Activated B cell treated with CpG ODN at 0.5 μM for 24 hours (primary cell): ENCODE measurements at regions of chr19 and their contacts with region 1.

Region 1: DNA sequence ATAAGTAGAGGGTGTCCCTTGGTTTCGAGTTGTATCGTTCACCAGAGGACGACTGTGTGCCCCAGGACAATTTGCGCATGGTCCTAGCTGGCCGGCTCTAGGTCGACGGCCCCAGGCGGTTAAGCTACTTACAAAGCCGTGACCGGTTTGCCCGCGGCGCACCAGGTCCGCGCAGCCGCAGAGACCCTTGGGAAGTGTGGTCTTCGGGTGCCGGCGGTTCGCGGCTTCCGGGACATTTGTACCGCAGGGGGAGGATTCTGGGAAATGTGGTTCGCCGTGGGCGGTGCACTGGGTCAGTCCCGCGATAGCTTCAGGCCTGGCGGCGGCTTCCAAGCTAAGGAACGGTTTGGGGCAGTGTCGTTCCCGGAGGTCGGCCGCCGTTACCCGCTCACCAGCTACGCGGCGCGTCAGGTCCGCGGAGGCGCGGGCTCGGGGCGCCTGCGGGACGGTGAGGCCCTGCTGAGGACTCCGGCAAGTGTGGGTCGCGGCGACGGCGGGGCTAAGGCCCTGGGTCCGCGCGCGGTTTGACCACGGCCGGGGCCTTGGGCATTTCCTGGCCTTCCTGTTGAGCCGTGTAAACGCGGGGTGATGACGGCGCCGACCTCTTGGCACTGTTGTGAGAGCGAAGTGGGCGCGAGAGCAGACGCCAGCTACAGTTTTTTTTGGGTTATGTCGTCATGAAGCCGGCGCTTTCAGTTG is at the start of gene ZNF302:
- DNase-seq: peak; percentile 94
- ATAC-seq: peak; percentile 90
- H3K4me3 Mint-ChIP-seq: peak within 1 kb of the TSS; percentile 98
- H3K27ac Mint-ChIP-seq: peak within 1 kb of the TSS; percentile 99
- H3K4me1 Mint-ChIP-seq: peaks cover 33% of the 10 kb centered on the region
- H3K27me3 Mint-ChIP-seq: peaks cover 6% of the 10 kb centered on the region
- CTCF ChIP-seq: no peak
- total RNA-seq, gene ZNF302: 33.7 and 38.1 TPM in 2 replicates

Region 2: GRCh38 chr19:34193439-34193838 is 484.1 kb before region 1 on chr19:
- CTCF ChIA-PET with region 1: no interaction called
- POLR2A ChIA-PET with region 1: interaction called, 10 read pairs
- intact Hi-C with region 1: no loop called
- DNase-seq: no peak
- ATAC-seq: peak; percentile 85
- H3K4me3 Mint-ChIP-seq: peak overlapping the region; percentile 66
- H3K27ac Mint-ChIP-seq: peak overlapping the region; percentile 82
- H3K4me1 Mint-ChIP-seq: peaks cover 68% of the 10 kb centered on the region
- H3K27me3 Mint-ChIP-seq: no peaks in the 10 kb centered on the region
- CTCF ChIP-seq: no peak

Region 3: GRCh38 chr19:34436716-34437115 is 240.8 kb before region 1 on chr19:
- CTCF ChIA-PET with region 1: no interaction called
- POLR2A ChIA-PET with region 1: no interaction called
- intact Hi-C with region 1: no loop called
- DNase-seq: no peak
- ATAC-seq: no peak
- H3K4me3 Mint-ChIP-seq: no peak overlapping the region
- H3K27ac Mint-ChIP-seq: no peak overlapping the region
- H3K4me1 Mint-ChIP-seq: peaks cover 4% of the 10 kb centered on the region
- H3K27me3 Mint-ChIP-seq: no peaks in the 10 kb centered on the region
- CTCF ChIP-seq: no peak

Region 4: DNA sequence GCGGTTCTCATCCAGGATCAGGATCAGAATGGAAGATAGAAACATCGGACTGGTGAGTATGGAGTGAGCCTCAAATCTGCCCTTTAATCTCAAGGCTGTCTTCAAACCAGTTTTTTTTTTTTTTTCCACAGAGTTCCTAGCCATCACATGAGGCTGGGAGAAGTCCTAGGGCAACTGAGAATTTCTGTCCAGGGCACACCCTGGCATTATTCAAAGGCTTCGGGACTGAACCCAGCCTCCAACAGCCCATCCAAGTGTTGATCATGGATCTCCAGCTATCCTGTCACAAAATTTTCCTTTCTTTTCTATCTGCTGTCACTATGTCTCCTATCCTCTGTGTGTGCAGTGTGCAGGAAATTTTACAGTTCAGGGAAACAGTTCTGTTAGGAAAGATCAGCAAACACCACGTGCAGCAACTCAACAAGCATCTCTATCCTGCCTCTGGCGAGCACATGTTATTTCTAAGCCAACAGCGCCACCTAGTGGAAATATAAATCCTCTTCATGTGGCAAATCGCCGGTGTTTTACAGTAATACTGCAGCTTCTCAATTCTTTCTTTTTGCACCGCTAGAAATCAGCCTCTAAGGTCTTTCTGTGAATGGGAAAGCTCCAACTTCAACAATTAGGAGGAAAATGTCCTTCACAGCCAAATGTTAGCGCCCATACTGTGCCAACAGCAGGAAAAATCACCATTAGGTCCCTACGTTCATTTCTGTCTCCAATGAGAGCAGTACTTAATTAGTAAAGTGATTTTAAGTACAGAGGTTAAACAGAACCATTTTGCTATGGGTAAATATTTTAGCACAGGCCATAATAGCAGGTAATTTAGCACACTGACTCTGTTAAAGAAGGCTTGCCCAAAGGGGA is 35.1 kb after region 1 on chr19:
- CTCF ChIA-PET with region 1: no interaction called
- POLR2A ChIA-PET with region 1: interaction called, 3 read pairs
- intact Hi-C with region 1: loop called (anchors 5 kb)
- DNase-seq: no peak
- ATAC-seq: peak; percentile 49
- H3K4me3 Mint-ChIP-seq: no peak overlapping the region
- H3K27ac Mint-ChIP-seq: no peak overlapping the region
- H3K4me1 Mint-ChIP-seq: no peaks in the 10 kb centered on the region
- H3K27me3 Mint-ChIP-seq: peaks cover 18% of the 10 kb centered on the region
- CTCF ChIP-seq: peak; percentile 61

Region 5: DNA sequence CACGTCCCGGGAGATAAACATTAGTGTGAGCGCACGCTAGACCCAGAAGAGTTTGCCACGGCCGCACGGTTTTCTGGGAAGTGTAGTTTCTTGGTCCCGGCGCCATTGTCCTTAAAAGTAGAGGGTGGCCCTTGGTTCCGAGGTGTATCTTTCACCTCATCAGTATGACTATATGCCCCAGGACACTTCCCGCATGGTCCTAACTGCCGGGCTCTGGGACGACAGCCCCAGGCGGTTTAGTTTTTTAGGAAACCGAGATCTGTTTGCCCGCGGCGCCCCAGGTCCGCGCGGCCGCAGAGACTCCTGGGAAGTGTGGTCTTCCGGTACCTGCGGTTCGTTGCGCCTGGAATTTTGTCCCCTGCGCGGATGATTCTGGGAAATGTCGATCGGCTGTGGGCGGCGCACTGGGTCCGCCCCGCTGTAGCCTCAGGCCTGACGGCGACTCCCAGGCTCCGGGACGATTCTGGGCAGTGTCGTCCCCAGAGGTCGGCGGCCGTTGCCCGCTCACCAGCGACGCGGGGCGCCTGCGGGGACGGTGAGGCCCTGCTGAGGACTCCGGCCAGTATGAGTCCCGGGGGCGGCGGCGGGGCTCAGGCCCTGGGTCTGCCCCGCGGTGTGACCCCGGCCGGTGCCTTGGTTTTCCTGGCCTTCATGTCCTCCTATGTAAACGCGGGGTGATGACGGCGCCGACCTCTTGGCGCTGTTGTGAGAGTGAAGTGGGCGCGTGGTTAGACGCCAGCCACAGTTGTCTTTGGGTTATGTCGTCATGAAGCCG is 56.5 kb after region 1 on chr19 and contains the start of gene ZNF181:
- CTCF ChIA-PET with region 1: no interaction called
- POLR2A ChIA-PET with region 1: interaction called, 16 read pairs
- intact Hi-C with region 1: loop called (anchors 1 kb)
- DNase-seq: peak; percentile 72
- ATAC-seq: peak; percentile 88
- H3K4me3 Mint-ChIP-seq: peak within 1 kb of the TSS; percentile 97
- H3K27ac Mint-ChIP-seq: peak within 1 kb of the TSS; percentile 97
- H3K4me1 Mint-ChIP-seq: peaks cover 25% of the 10 kb centered on the region
- H3K27me3 Mint-ChIP-seq: peaks cover 3% of the 10 kb centered on the region
- CTCF ChIP-seq: no peak
- total RNA-seq, gene ZNF181: 8.2 and 8.7 TPM in 2 replicates

Region 6: DNA sequence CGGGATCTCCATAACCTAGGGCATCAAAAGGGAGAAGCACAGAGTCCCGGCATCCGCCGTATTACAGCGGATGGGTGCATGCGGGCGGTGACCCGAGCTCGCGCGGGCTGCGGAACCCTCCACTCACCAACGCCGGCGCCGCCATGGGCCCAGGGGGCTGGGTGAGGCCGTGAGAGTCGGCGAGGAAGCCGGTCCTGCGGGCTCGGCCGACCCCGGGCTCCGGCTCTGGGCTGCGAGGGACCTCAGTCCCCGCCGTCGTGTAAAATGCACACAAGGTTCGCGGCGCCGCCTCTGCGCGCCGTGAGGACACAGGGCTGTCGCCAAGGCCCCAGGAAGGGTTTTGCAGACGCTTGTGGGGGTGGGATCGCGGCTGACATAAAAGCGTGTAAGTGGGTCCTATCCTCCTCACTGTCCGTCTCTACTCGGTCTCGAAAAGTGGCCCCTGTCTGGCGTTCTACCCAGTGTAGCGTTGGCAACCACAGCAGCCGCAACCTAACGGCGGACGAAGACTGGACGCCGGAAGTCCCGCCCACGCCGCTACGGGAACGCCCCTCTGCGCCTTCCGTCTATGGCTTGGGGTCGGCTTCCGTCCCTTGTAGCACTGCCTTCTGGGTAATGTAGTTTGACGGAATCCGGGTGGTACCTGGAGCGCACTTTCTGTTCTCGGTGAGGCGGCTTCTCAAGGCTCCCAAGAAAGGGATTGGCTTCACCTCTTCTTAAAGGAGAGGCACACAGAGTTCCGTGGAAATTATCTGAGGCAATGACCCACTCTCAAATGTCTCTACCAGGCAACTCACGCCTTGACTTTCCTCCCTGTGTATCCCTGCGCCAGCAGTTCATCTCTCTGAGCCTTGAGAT is 95.4 kb after region 1 on chr19 and contains the start of gene ZNF599:
- CTCF ChIA-PET with region 1: no interaction called
- POLR2A ChIA-PET with region 1: interaction called, 8 read pairs
- intact Hi-C with region 1: loop called (anchors 1 kb)
- DNase-seq: peak; percentile 91
- ATAC-seq: peak; percentile 98
- H3K4me3 Mint-ChIP-seq: peak within 1 kb of the TSS; percentile 93
- H3K27ac Mint-ChIP-seq: peak within 1 kb of the TSS; percentile 86
- H3K4me1 Mint-ChIP-seq: peaks cover 15% of the 10 kb centered on the region
- H3K27me3 Mint-ChIP-seq: peaks cover 15% of the 10 kb centered on the region
- CTCF ChIP-seq: no peak
- total RNA-seq, gene ZNF599: 3.1 and 3.6 TPM in 2 replicates

Region 7: DNA sequence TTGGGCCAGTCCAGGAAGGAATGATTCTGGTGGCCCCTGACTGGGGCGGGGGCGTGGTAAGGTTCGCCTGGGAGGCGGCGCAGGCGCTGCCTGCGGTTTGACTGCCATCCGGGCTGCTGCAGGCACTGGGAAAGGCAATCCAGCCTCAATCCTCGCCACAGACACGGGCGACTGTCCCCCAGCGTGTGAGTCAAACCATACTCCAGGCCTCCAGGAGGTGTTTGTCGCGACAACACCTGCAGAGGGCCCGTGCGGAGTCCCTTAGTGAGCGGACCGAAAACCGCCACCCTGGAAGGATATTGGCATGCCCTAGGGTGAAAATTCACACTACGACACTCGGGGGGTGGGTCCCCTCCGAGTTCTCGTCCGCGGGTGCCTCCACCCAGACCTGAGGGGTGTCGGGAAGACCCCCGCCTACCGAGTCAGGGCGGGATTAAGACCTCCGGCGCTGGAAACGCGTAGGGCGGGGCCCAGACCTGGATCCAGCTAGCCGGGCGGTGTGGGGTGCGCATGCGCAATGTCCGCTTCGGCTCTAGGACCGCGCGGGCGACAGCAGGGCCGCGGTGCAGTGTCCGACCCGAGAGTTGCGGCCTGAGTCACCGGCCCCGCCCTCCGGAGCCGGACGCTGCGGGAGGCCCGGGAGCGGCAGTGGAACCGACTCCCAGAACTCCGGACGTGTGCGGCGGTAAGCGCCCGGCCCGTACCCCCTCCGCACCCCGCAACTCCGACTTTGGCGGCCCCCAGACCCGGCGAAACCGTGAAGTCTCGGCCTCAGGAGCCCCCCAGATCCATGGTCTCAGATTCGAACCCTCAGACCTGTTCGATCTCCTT is 1462.2 kb after region 1 on chr19 and contains the start of gene CAPNS1:
- CTCF ChIA-PET with region 1: no interaction called
- POLR2A ChIA-PET with region 1: no interaction called
- intact Hi-C with region 1: loop called (anchors 5 kb)
- DNase-seq: peak; percentile 93
- ATAC-seq: peak; percentile 76
- H3K4me3 Mint-ChIP-seq: peak within 1 kb of the TSS; percentile 97
- H3K27ac Mint-ChIP-seq: peak within 1 kb of the TSS; percentile 97
- H3K4me1 Mint-ChIP-seq: peaks cover 16% of the 10 kb centered on the region
- H3K27me3 Mint-ChIP-seq: peaks cover 2% of the 10 kb centered on the region
- CTCF ChIP-seq: no peak
- total RNA-seq, gene CAPNS1: 442 and 477 TPM in 2 replicates